ENCODE measurements at regions of chr1 and their contacts with region 1.

Region 1: DNA sequence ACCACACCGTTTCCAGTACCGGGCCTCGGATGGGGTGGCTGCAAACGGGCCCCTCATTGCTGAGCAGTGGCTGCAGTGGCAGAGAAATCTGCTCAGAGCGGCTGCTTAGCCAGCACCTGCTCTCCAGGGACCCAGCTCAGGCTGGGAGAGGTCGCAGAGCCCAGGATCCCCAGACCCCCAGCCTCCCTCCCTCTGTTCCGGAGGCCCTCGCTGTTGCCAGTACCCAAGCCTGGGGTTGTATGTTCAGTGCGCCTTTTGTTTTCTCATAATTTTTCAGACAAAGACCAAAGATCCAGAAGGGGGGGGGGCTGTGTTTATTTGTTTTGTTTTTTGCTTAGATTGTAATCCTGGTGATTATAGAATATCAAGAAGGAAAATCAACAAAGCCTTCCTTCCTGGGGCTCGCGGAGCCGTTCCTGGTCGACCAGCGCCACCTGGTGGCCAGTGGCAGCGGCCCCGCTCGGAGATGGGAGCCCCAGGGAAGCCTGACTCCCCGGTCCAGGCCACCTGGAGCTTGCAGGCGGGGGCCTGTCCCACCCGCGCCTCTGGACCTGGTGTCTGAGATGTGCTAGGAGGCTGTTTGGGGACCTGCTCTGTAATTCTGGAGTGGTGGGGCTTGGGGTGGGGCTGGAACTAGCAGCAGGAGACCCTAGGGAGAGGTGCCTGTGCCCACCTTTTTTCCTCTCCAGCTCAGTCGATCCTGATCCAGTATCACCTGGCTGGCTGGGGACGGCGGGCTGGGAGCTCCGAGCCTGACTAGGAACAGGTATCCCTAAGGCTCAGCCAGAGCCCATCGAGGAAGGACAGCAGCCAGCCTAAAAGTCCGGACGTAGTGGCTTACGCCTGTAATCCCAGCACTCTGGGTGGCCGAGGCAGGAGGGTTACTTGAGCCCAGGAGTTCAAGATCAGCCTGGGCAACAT is 123.9 kb upstream of the VAMP3 start:
- DNase-seq: peak; percentile 64 to 71
- H3K4me3 ChIP-seq: no peak overlapping the region
- H3K27ac ChIP-seq: no peak overlapping the region
- H3K4me1 ChIP-seq: peaks cover 5 to 31% of the 10 kb centered on the region in 2 donors
- H3K27me3 ChIP-seq: no peaks in the 10 kb centered on the region
- CTCF ChIP-seq: peak; percentile 71 to 97 (median 88)
- POLR2A ChIP-seq: no peak

Region 2: GRCh38 chr1:7042322-7043190 is 604.7 kb before region 1 on chr1:
- intact Hi-C with region 1: loop called (anchors 5 kb)
- DNase-seq: peak; percentile 31 to 32
- H3K4me3 ChIP-seq: no peak overlapping the region
- H3K27ac ChIP-seq: no peak overlapping the region
- H3K4me1 ChIP-seq: no peaks in the 10 kb centered on the region
- H3K27me3 ChIP-seq: no peaks in the 10 kb centered on the region
- CTCF ChIP-seq: peak; percentile 19 to 64 (median 50)
- POLR2A ChIP-seq: no peak

Region 3: GRCh38 chr1:7224644-7225043 is 422.6 kb before region 1 on chr1:
- intact Hi-C with region 1: loop called (anchors 10 kb)
- DNase-seq: peak; percentile 62 to 69
- H3K4me3 ChIP-seq: no peak overlapping the region
- H3K27ac ChIP-seq: no peak overlapping the region
- H3K4me1 ChIP-seq: no peaks in the 10 kb centered on the region
- H3K27me3 ChIP-seq: no peaks in the 10 kb centered on the region
- CTCF ChIP-seq: peak in 4 of 6 experiments; percentile 10 to 45 (median 27)
- POLR2A ChIP-seq: no peak

Measured in thyroid gland (tissue), 4 donors.